K562 (cell line): ENCODE measurements at regions of chr12 and their contacts with region 1.

Region 1: DNA sequence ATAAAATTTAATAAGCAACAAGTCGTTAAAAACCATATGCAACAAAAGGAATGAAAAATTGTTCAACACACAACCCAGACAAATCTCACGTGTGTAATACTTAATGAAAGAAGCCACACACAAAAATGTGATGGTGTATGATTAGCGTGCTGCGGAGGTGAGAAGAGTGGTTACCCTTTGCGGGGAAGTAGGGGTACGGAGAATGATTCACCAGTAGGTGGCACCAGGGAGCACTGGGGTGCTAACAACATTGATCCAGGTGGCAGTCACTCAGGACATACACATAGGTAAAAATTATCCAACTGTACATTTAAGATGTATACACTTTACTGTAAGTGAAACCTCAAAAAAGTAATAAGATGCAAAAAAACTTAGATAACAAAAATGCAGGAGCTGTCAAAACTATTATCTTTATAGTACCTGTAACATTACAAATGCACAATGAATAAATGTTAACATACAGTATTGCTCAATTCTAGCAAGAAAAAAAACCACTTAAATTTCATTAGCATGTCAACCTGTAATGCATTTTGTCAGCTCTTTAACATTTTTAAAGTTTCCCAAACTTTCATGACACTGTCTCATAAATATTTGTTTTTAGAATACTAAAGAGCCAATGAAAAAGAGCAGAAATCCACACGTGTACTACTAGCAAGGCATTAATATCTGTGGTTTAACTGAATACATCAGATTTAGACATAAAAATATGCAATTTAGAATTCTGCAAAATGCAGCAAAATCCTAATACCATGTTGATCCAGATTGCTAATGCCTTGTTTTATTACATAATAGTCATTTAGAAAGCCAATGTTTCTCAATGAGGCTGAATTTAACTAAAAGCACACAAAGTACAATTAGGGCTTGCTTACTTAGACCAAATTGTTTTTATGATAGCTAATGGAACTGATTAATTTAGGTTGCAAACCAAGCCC is 46.7 kb downstream of the TMCC3 start:
- DNase-seq: peak; percentile 51 to 56 (median 55)
- ATAC-seq: peak; percentile 84
- H3K4me3 ChIP-seq: no peak overlapping the region
- H3K27ac ChIP-seq: no peak overlapping the region
- H3K4me1 ChIP-seq: no peaks in the 10 kb centered on the region
- H3K27me3 ChIP-seq: no peaks in the 10 kb centered on the region
- CTCF ChIP-seq: peak; percentile 70 to 81 (median 71)
- EP300 ChIP-seq: no peak
- POLR2A ChIP-seq: no peak
- RAD21 ChIP-seq: peak; percentile 48 to 68

Region 2: DNA sequence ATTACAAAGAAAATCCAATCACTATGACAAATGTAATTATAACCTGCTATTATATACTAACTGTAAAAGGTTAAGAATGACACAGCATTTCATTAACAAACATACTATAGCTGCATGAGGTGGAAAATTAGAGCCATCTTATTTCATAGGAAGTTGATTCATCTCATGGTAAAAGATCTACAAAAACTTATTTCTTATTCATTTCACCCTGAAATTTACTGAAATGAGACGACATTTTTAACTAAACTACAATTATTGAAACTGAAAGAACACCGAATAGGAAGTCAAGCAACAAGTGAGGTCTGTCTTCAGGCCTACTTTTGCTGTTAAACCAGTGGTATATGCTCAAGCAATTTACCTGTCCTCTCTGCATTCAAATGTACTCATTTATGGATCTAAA is 231.2 kb before region 1 on chr12:
- CTCF ChIA-PET with region 1: no interaction called
- POLR2A ChIA-PET with region 1: no interaction called
- in situ Hi-C with region 1: no loop called
- intact Hi-C with region 1: no loop called
- DNase-seq: no peak
- ATAC-seq: no peak
- H3K4me3 ChIP-seq: no peak overlapping the region
- H3K27ac ChIP-seq: no peak overlapping the region
- H3K4me1 ChIP-seq: no peaks in the 10 kb centered on the region
- H3K27me3 ChIP-seq: no peaks in the 10 kb centered on the region
- CTCF ChIP-seq: no peak
- EP300 ChIP-seq: no peak
- POLR2A ChIP-seq: no peak
- RAD21 ChIP-seq: no peak

Region 3: GRCh38 chr12:94762259-94762942 is 158.7 kb after region 1 on chr12:
- CTCF ChIA-PET with region 1: interaction called, 7 read pairs
- POLR2A ChIA-PET with region 1: no interaction called
- in situ Hi-C with region 1: no loop called
- intact Hi-C with region 1: loop called (anchors 5 kb)
- DNase-seq: no peak
- ATAC-seq: no peak
- H3K4me3 ChIP-seq: no peak overlapping the region
- H3K27ac ChIP-seq: no peak overlapping the region
- H3K4me1 ChIP-seq: no peaks in the 10 kb centered on the region
- H3K27me3 ChIP-seq: peaks cover 3 to 12% of the 10 kb centered on the region in 2 experiments; a peak in 2 of 5 replicates
- CTCF ChIP-seq: no peak
- EP300 ChIP-seq: no peak
- POLR2A ChIP-seq: no peak
- RAD21 ChIP-seq: no peak